Activated B cell treated with CpG ODN at 0.5 μM for 24 hours (primary cell): ENCODE measurements at regions of chr20 and their contacts with region 1.

Region 1: GRCh38 chr20:33443512-33444239 is at the start of gene SNTA1:
- DNase-seq: peak; percentile 86
- ATAC-seq: peak; percentile 89
- H3K4me3 Mint-ChIP-seq: peak within 1 kb of the TSS; percentile 89
- H3K27ac Mint-ChIP-seq: peak within 1 kb of the TSS; percentile 83
- H3K4me1 Mint-ChIP-seq: peaks cover 29% of the 10 kb centered on the region
- H3K27me3 Mint-ChIP-seq: no peaks in the 10 kb centered on the region
- CTCF ChIP-seq: no peak
- total RNA-seq, gene SNTA1: 1.7 and 2.0 TPM in 2 replicates

Region 2: GRCh38 chr20:33299111-33299603 is 144.5 kb before region 1 on chr20:
- CTCF ChIA-PET with region 1: no interaction called
- POLR2A ChIA-PET with region 1: no interaction called
- intact Hi-C with region 1: loop called (anchors 10 kb)
- DNase-seq: peak; percentile 69
- ATAC-seq: peak; percentile 75
- H3K4me3 Mint-ChIP-seq: no peak overlapping the region
- H3K27ac Mint-ChIP-seq: no peak overlapping the region
- H3K4me1 Mint-ChIP-seq: no peaks in the 10 kb centered on the region
- H3K27me3 Mint-ChIP-seq: peaks cover 13% of the 10 kb centered on the region
- CTCF ChIP-seq: peak; percentile 95

Region 3: GRCh38 chr20:33394721-33395120 is 49.0 kb before region 1 on chr20:
- CTCF ChIA-PET with region 1: no interaction called
- POLR2A ChIA-PET with region 1: interaction called, 37 read pairs
- intact Hi-C with region 1: loop called (anchors 1 kb)
- DNase-seq: no peak
- ATAC-seq: no peak
- H3K4me3 Mint-ChIP-seq: no peak overlapping the region
- H3K27ac Mint-ChIP-seq: no peak overlapping the region
- H3K4me1 Mint-ChIP-seq: peaks cover 20% of the 10 kb centered on the region
- H3K27me3 Mint-ChIP-seq: no peaks in the 10 kb centered on the region
- CTCF ChIP-seq: no peak

Region 4: GRCh38 chr20:33401184-33401920 is 42.3 kb before region 1 on chr20 and contains the start of gene CDK5RAP1:
- CTCF ChIA-PET with region 1: no interaction called
- POLR2A ChIA-PET with region 1: interaction called, 37 read pairs
- intact Hi-C with region 1: loop called (anchors 2 kb)
- DNase-seq: peak; percentile 76
- ATAC-seq: peak; percentile 99
- H3K4me3 Mint-ChIP-seq: peak within 1 kb of the TSS; percentile 94
- H3K27ac Mint-ChIP-seq: peak within 1 kb of the TSS; percentile 90
- H3K4me1 Mint-ChIP-seq: peaks cover 41% of the 10 kb centered on the region
- H3K27me3 Mint-ChIP-seq: no peaks in the 10 kb centered on the region
- CTCF ChIP-seq: no peak
- total RNA-seq, gene CDK5RAP1: 44.2 and 50.5 TPM in 2 replicates

Region 5: GRCh38 chr20:33408716-33409654 is 34.7 kb before region 1 on chr20:
- CTCF ChIA-PET with region 1: interaction called, 3 read pairs
- POLR2A ChIA-PET with region 1: no interaction called
- intact Hi-C with region 1: loop called (anchors 1 kb)
- DNase-seq: peak; percentile 39
- ATAC-seq: peak; percentile 90
- H3K4me3 Mint-ChIP-seq: peak overlapping the region; percentile 61
- H3K27ac Mint-ChIP-seq: peak overlapping the region; percentile 90
- H3K4me1 Mint-ChIP-seq: peaks cover 44% of the 10 kb centered on the region
- H3K27me3 Mint-ChIP-seq: no peaks in the 10 kb centered on the region
- CTCF ChIP-seq: no peak

Region 6: GRCh38 chr20:33489495-33490022 is 45.9 kb after region 1 on chr20:
- CTCF ChIA-PET with region 1: no interaction called
- POLR2A ChIA-PET with region 1: interaction called, 23 read pairs
- intact Hi-C with region 1: loop called (anchors 1 kb)
- DNase-seq: peak; percentile 99
- ATAC-seq: peak; percentile 96
- H3K4me3 Mint-ChIP-seq: peak overlapping the region; percentile 84
- H3K27ac Mint-ChIP-seq: peak overlapping the region; percentile 88
- H3K4me1 Mint-ChIP-seq: peaks cover 15% of the 10 kb centered on the region
- H3K27me3 Mint-ChIP-seq: no peaks in the 10 kb centered on the region
- CTCF ChIP-seq: no peak

Region 7: DNA sequence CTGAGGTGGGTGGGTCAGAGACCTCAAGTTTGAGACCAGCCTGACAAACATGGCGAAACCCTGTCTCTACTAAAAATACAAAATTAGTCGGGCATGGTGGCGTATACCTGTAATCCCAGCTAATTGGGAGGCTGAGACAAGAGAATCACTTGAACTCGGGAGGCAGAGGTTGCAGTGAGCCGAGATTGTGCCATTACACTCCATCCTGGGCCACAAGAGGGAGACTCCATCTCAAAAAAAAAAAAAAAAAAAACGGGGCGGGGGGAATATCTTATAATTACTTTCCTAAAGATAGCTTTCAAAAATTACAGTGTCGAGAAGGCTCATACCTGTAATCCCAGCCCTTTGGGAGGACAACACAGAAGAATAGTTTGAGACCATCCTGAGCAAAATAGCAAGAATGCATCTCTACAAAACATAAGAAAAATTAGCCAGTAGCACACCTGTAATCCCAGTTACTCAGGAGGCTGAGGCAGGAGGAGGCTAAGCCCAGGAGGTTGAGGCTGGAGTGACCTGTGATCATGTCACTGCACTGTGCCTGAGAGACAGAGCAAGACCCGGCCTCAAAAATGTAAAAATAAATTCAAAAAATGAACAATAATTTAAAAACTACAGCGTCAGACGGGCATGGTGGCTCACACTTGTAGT is 72.0 kb after region 1 on chr20:
- CTCF ChIA-PET with region 1: no interaction called
- POLR2A ChIA-PET with region 1: no interaction called
- intact Hi-C with region 1: no loop called
- DNase-seq: no peak
- ATAC-seq: no peak
- H3K4me3 Mint-ChIP-seq: no peak overlapping the region
- H3K27ac Mint-ChIP-seq: no peak overlapping the region
- H3K4me1 Mint-ChIP-seq: peaks cover 25% of the 10 kb centered on the region
- H3K27me3 Mint-ChIP-seq: no peaks in the 10 kb centered on the region
- CTCF ChIP-seq: no peak

Region 8: DNA sequence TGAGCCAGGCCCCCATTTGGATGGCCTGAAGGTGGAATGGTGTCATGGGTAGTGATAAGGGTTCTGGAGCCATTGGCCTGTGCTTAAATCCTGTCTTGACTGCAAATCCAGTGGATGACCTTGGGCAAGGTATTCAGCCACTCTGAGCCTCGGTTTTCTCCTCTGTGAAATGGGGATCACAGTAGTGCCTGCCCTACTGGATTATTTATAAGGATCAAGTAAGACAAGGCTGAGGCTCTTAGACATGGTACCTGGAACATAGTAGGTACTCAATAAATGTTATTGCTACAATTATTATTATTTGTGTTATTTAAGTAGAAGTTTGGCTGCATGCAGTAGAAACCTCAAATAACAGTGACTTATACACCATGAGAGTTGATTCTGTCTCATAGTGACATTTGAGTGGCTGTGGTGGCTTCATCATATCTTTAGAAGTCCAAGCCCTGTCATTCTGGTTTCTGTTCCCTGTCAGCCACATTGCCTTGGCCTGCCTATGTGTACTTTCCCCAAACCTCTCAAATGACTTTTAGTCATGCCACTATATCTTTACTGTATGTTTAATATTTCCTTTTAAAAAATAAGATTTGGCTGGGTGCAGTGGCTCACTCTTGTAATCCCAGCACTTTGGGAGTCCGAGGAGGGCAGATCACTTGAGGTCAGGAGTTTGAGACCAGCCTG is 329.9 kb after region 1 on chr20:
- CTCF ChIA-PET with region 1: no interaction called
- POLR2A ChIA-PET with region 1: no interaction called
- intact Hi-C with region 1: no loop called
- DNase-seq: no peak
- ATAC-seq: peak; percentile 65
- H3K4me3 Mint-ChIP-seq: peak overlapping the region; percentile 41
- H3K27ac Mint-ChIP-seq: peak overlapping the region; percentile 93
- H3K4me1 Mint-ChIP-seq: peaks cover 64% of the 10 kb centered on the region
- H3K27me3 Mint-ChIP-seq: no peaks in the 10 kb centered on the region
- CTCF ChIP-seq: no peak